Endothelial cell of umbilical vein (primary cell): ENCODE measurements at regions of chr2 and their contacts with region 1.

Region 1: GRCh38 chr2:106193977-106194778 is at the start of gene UXS1:
- DNase-seq: peak; percentile 98
- H3K4me3 ChIP-seq: peak within 1 kb of the TSS; percentile 74 to 95 (median 92)
- H3K27ac ChIP-seq: peak within 1 kb of the TSS; percentile 13
- H3K4me1 ChIP-seq: peaks cover 12% of the 10 kb centered on the region
- H3K27me3 ChIP-seq: peaks cover 0 to 3% of the 10 kb centered on the region in 2 experiments
- CTCF ChIP-seq: no peak
- POLR2A ChIP-seq: peak; percentile 72
- total RNA-seq, gene UXS1: 43.2 and 44.6 TPM in 2 replicates

Region 2: DNA sequence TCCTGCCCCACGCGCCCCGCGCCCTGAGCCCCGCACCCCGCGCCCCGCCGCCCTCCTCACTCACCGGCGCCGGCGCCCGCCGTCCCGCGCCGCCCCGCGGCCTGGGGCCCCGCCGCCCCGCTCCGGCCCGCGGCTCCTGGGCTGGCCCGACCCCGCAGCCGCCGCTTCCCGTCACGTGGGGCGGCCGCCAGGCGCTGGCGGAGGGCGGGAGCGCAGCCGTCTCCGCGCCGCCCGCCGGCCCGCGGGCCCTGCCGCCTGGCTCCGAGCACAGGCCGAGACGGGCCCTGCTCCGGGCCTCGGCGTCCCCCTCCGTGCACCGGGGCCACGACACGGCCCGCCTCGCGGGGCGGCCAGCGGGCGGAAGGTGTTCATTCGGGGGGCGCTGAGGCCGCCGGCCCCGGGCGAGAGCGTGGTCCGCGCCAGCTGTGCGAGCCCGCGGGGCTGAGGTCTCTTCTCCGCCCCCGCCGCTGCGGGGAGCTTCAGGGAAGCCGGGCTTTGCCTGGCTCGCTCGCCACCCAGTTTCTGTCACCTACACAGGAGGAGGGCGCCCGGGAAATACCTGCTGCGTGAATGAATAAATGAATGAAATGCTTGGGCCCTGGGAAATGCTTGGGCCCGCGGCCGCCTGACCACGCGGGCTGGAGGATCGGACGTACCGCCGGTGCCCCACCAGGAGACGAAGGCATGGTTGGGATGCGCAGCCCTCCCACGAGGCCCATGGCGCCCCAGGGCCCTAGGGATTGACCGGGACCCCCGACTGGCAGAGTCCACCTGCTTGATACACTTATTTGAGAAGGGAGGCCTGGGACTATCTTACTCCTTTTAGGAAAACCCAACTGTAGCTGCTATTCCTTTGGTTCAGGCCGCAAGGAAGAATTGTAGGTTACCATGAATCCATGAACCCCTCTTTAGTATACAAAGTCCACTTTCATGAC is 864.4 kb before region 1 on chr2 and contains the start of gene TGFBRAP1:
- CTCF ChIA-PET with region 1: no interaction called
- POLR2A ChIA-PET with region 1: no interaction called
- dilution Hi-C with region 1: no loop called
- intact Hi-C with region 1: loop called (anchors 10 kb)
- DNase-seq: peak; percentile 35
- H3K4me3 ChIP-seq: peak within 1 kb of the TSS in 2 of 3 experiments; percentile 42 to 84
- H3K27ac ChIP-seq: peak within 1 kb of the TSS; percentile 82
- H3K4me1 ChIP-seq: peaks cover 40% of the 10 kb centered on the region
- H3K27me3 ChIP-seq: no peaks in the 10 kb centered on the region
- CTCF ChIP-seq: peak in 1 of 2 donors; percentile 4
- POLR2A ChIP-seq: peak; percentile 72
- total RNA-seq, gene TGFBRAP1: 34.9 and 37.6 TPM in 2 replicates

Region 3: DNA sequence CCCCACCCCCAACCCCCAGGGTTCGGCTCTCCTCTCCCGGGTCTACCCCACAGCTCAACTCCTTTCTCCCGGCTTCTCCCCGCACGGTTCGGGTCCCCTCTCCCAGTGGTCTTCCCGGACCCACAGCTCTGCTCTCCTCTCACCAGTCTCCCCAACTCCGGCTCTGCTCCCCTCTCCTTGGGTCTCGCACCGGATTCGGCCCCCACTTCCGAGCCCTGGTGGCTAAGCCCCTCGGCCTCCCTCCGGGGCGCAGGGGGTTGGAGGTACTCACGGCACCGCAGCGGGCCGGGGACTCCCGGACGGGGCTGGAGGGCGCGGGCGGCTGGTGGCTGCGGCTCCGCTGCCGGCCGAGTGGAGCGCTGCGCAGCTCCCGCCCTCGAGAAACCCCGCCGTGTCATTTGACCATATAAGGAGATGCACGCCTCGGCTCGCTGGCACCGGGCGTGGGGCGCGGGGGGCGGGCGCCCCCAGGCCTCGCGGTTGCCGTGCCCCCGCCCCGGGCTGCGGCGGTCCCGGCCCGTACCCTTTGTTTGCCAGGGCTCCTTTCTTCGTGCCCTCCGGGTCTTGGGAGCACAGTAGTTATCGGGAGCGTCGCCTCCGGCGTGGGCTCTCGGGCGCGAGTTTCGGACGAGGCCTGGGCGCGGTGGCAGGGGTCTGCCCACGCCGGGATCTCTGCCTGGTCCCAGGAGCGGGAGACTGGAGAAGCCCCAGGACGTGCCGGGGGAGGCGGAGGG is 795.3 kb before region 1 on chr2 and contains the start of gene FHL2:
- CTCF ChIA-PET with region 1: no interaction called
- POLR2A ChIA-PET with region 1: no interaction called
- dilution Hi-C with region 1: no loop called
- intact Hi-C with region 1: loop called (anchors 10 kb)
- DNase-seq: peak; percentile 77
- H3K4me3 ChIP-seq: peak within 1 kb of the TSS; percentile 59 to 99 (median 99)
- H3K27ac ChIP-seq: peak within 1 kb of the TSS; percentile 92
- H3K4me1 ChIP-seq: peaks cover 43% of the 10 kb centered on the region
- H3K27me3 ChIP-seq: no peaks in the 10 kb centered on the region
- CTCF ChIP-seq: peak; percentile 40 to 62
- POLR2A ChIP-seq: peak; percentile 87
- total RNA-seq, gene FHL2: 178 and 197 TPM in 2 replicates

Region 4: GRCh38 chr2:106104332-106105062 is 89.7 kb before region 1 on chr2:
- CTCF ChIA-PET with region 1: interaction called, 5 read pairs
- POLR2A ChIA-PET with region 1: no interaction called
- dilution Hi-C with region 1: no loop called
- intact Hi-C with region 1: loop called (anchors 2 kb)
- DNase-seq: peak; percentile 63
- H3K4me3 ChIP-seq: no peak overlapping the region
- H3K27ac ChIP-seq: no peak overlapping the region
- H3K4me1 ChIP-seq: no peaks in the 10 kb centered on the region
- H3K27me3 ChIP-seq: no peaks in the 10 kb centered on the region
- CTCF ChIP-seq: peak; percentile 78 to 91
- POLR2A ChIP-seq: no peak

Region 5: GRCh38 chr2:106175086-106175850 is 18.9 kb before region 1 on chr2:
- CTCF ChIA-PET with region 1: no interaction called
- POLR2A ChIA-PET with region 1: no interaction called
- dilution Hi-C with region 1: no loop called
- intact Hi-C with region 1: no loop called
- DNase-seq: no peak
- H3K4me3 ChIP-seq: no peak overlapping the region
- H3K27ac ChIP-seq: no peak overlapping the region
- H3K4me1 ChIP-seq: no peaks in the 10 kb centered on the region
- H3K27me3 ChIP-seq: no peaks in the 10 kb centered on the region
- CTCF ChIP-seq: no peak
- POLR2A ChIP-seq: no peak

Region 6: DNA sequence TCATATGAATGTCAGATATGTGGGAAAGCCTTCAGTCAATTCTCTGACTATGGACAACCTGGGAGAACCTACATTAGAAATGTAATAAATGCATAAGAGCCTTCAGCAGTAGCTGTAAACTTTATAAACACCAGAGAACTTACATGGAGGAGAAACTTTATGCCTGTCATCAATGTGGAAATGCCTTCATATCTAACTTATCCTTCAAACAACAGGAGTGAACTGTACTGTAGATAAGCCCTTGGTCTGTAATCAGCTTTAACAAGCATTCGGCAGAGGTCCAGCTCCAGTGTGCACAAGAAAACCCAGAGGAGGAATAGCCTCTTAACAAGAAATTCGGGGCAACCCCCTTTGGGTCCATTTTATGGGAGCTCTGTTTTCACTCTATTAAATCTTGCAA is 14.7 kb after region 1 on chr2:
- CTCF ChIA-PET with region 1: interaction called, 4 read pairs
- POLR2A ChIA-PET with region 1: no interaction called
- dilution Hi-C with region 1: no loop called
- intact Hi-C with region 1: loop called (anchors 1 kb)
- DNase-seq: no peak
- H3K4me3 ChIP-seq: no peak overlapping the region
- H3K27ac ChIP-seq: no peak overlapping the region
- H3K4me1 ChIP-seq: no peaks in the 10 kb centered on the region
- H3K27me3 ChIP-seq: no peaks in the 10 kb centered on the region
- CTCF ChIP-seq: no peak
- POLR2A ChIP-seq: no peak

Region 7: GRCh38 chr2:106582148-106583143 is 388.3 kb after region 1 on chr2:
- CTCF ChIA-PET with region 1: no interaction called
- POLR2A ChIA-PET with region 1: no interaction called
- dilution Hi-C with region 1: no loop called
- intact Hi-C with region 1: loop called (anchors 5 kb)
- DNase-seq: peak; percentile 74
- H3K4me3 ChIP-seq: peak overlapping the region in 1 of 3 experiments; percentile 44
- H3K27ac ChIP-seq: no peak overlapping the region
- H3K4me1 ChIP-seq: no peaks in the 10 kb centered on the region
- H3K27me3 ChIP-seq: no peaks in the 10 kb centered on the region
- CTCF ChIP-seq: peak; percentile 88
- POLR2A ChIP-seq: no peak